GM12878 (cell line): ENCODE measurements at regions of chr14 and their contacts with region 1.

Region 1: GRCh38 chr14:95150910-95151309 is 6.4 kb downstream of the DICER1 start:
- DNase-seq: no peak
- ATAC-seq: peak; percentile 16; the same call in 2 of the 3 replicates
- H3K4me3 ChIP-seq: 0 out of 2 replicates have a peak overlapping the region, but pooled peaks have one; percentile 21
- H3K27ac ChIP-seq: peak overlapping the region; percentile 6; the same call in 1 of the 2 replicates
- H3K4me1 ChIP-seq: peaks cover 8% of the 10 kb centered on the region
- H3K27me3 ChIP-seq: no peaks in the 10 kb centered on the region
- CTCF ChIP-seq: no peak
- EP300 ChIP-seq: no peak
- POLR2A ChIP-seq: no peak
- RAD21 ChIP-seq: no peak

Region 2: DNA sequence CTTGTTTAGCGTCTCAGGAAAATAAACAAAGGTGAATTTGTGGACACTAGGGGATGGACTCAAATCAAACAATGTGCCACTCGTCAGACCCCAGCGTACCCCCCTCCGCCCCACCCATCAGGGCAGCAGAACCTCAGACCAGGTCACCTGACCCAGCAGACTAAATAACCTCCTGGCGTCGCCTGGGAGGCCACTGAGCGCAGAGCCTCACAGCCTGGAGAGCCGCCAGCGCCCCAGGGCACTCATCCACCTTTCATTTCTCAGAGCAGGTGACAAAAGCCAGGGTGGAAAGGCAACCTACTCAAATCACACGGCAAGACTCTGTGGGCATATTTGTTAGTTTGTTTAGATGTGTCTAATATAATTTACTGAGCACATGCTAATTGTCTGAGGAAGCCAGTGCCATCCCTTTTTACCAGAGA is 94.4 kb before region 1 on chr14:
- CTCF ChIA-PET with region 1: no interaction called
- POLR2A ChIA-PET with region 1: no interaction called
- RAD21 ChIA-PET with region 1: no interaction called
- SMC1A ChIA-PET with region 1: no interaction called
- in situ Hi-C with region 1: no loop called
- intact Hi-C with region 1: no loop called
- DNase-seq: no peak
- ATAC-seq: no peak
- H3K4me3 ChIP-seq: no peak overlapping the region
- H3K27ac ChIP-seq: no peak overlapping the region
- H3K4me1 ChIP-seq: no peaks in the 10 kb centered on the region
- H3K27me3 ChIP-seq: no peaks in the 10 kb centered on the region; a peak in 2 of 4 replicates
- CTCF ChIP-seq: no peak
- EP300 ChIP-seq: no peak
- POLR2A ChIP-seq: no peak
- RAD21 ChIP-seq: no peak

Region 3: GRCh38 chr14:95134304-95134933 is 16.5 kb before region 1 on chr14:
- CTCF ChIA-PET with region 1: interaction called, 5 read pairs
- POLR2A ChIA-PET with region 1: interaction called, 3 read pairs
- RAD21 ChIA-PET with region 1: interaction called, 3 read pairs
- SMC1A ChIA-PET with region 1: interaction called, 10 read pairs
- in situ Hi-C with region 1: no loop called
- intact Hi-C with region 1: no loop called
- DNase-seq: no peak
- ATAC-seq: peak; percentile 80
- H3K4me3 ChIP-seq: no peak overlapping the region
- H3K27ac ChIP-seq: no peak overlapping the region
- H3K4me1 ChIP-seq: peaks cover 5% of the 10 kb centered on the region
- H3K27me3 ChIP-seq: no peaks in the 10 kb centered on the region
- CTCF ChIP-seq: no peak
- EP300 ChIP-seq: no peak
- POLR2A ChIP-seq: no peak
- RAD21 ChIP-seq: no peak

Region 4: DNA sequence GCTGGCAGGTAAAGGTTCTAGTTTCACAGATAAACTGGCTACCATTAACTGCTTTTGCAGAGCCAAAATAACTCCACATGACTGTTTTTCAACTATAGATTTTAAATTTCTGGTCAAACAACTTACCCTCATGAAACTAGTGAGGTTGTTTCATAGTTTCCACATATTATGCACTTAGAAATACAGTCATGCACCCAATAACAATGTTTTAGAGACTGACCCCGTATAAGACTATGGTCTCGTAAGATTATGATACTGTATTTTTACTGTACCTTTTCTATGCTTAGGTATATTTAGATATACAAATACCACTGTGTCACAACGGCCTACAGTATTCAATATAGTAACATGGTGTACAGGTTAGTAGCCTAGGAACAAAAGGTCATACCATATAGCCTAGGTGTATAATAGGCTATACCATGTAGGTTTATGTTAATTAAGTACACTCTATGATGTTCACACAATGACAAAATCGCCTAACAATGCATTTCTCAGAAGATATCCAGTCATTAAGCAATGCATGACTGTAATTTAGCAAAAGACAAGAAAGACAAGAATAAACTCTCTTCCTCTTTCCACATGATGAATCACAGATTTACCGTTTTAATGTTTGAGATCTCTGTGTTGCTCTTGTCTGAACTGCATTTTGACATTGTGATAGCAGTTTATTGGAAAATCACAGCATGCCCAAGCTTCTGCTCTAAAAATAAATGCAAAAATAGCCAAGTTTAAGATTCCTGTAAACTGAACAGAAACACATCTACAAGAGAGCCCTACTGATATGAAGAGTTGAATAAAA is 10.7 kb before region 1 on chr14:
- CTCF ChIA-PET with region 1: interaction called, 5 read pairs
- POLR2A ChIA-PET with region 1: interaction called, 6 read pairs
- RAD21 ChIA-PET with region 1: interaction called, 3 read pairs
- SMC1A ChIA-PET with region 1: interaction called, 13 read pairs
- in situ Hi-C with region 1: no loop called
- intact Hi-C with region 1: no loop called
- DNase-seq: no peak
- ATAC-seq: peak; percentile 47
- H3K4me3 ChIP-seq: peak overlapping the region; percentile 23; the same call in 1 of the 2 replicates
- H3K27ac ChIP-seq: peak overlapping the region; percentile 56
- H3K4me1 ChIP-seq: peaks cover 22% of the 10 kb centered on the region; the same call in 1 of the 2 replicates
- H3K27me3 ChIP-seq: no peaks in the 10 kb centered on the region
- CTCF ChIP-seq: no peak
- EP300 ChIP-seq: no peak
- POLR2A ChIP-seq: no peak
- RAD21 ChIP-seq: no peak